HCT116 (cell line): ENCODE measurements at regions of chr1 and their contacts with region 1.

Region 1: DNA sequence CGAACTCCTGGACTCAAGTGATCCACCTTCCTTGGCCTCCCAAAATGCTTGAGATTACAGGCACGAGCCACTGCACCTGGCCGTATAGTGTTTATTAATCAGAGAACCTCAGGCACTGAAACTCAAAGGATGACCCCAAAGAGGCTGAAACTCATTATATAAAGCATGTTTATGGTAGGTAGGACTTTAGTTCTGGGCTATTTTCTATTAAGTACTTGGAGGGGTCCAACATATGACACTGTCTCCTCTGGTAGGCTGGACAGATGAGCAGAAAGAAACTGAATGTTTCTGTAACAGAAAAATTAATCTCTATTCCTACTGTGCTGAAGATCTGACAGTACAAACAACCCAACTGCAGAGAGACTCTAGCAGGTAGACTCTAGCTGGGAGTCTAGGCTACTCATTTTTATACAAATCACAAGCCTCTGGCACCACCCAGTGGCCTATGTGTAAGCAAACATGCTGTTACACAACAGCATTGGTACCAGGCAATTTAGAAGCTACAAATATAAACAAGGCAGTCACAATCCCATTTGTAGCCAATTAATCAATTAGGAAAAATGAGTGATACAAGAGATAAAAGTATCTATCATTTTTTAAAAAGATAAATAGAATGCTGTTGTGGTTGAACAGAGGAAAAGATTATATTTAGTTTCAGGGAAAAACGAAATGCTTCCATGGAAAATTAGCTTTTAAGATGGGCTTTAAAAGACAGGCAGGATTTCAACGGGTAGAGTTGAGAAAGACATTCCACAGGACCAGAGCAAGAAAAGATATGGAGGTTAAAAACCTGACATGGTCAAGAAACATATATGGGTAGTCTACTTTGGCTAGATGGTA is 10.4 kb downstream of the DCAF8 start:
- DNase-seq: peak; percentile 38
- ATAC-seq: peak; percentile 96
- H3K4me3 ChIP-seq: no peak overlapping the region
- H3K27ac ChIP-seq: no peak overlapping the region
- H3K4me1 ChIP-seq: peaks cover 5 to 11% of the 10 kb centered on the region in 2 experiments; a peak in 3 of 4 replicates
- H3K27me3 ChIP-seq: no peaks in the 10 kb centered on the region
- CTCF ChIP-seq: peak; percentile 69 to 83 (median 71); a peak in 5 of 6 replicates
- POLR2A ChIP-seq: no peak
- RAD21 ChIP-seq: peak; percentile 81

Region 2: GRCh38 chr1:160085686-160086455 is 166.0 kb before region 1 on chr1:
- CTCF ChIA-PET with region 1: interaction called, 22 read pairs
- POLR2A ChIA-PET with region 1: no interaction called
- RAD21 ChIA-PET with region 1: interaction called in 1 of 2 experiments, 3 read pairs
- intact Hi-C with region 1: no loop called
- DNase-seq: peak; percentile 44
- ATAC-seq: peak; percentile 79
- H3K4me3 ChIP-seq: no peak overlapping the region
- H3K27ac ChIP-seq: no peak overlapping the region
- H3K4me1 ChIP-seq: no peaks in the 10 kb centered on the region; a peak in 1 of 4 replicates
- H3K27me3 ChIP-seq: peaks cover 9% of the 10 kb centered on the region
- CTCF ChIP-seq: peak; percentile 74 to 92 (median 78)
- POLR2A ChIP-seq: no peak
- RAD21 ChIP-seq: peak; percentile 76

Region 3: DNA sequence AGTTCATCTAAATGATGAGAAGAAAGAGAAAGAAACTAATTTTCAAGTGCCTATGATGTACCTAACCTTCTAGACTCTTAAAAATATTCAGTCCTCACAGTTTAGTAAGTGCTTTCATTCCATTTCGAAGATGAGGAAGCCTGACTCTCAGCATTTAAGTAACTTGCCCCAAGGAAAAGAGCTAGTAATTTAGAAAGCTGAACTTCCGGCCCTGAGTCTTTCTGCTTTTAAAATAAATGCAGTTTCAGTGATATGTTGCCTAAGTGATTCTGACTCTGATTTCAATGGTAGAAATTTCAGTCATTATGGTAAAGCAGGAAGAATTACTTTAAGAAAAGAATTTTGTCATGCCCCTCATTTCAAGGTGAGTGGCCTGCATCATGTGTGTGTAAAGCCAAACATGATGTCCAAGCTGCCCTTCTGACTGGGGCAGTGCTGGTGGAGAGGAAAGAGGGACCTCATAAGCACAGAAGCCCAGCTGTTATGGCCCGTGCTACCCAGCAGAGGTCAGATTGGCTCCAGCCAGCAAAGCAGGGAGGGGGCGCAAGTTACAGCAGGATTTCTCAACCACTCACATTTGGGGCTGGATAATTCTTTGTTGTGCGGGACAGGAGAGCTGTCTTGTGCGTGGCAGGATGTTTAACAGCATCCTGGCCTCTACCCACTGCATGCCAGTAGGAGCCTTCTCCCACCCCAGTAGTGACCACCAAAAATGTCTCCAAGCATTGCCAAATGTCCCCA is 89.8 kb before region 1 on chr1:
- CTCF ChIA-PET with region 1: interaction called, 13 read pairs
- POLR2A ChIA-PET with region 1: no interaction called
- RAD21 ChIA-PET with region 1: no interaction called
- intact Hi-C with region 1: loop called (anchors 1 kb)
- DNase-seq: no peak
- ATAC-seq: peak; percentile 93
- H3K4me3 ChIP-seq: no peak overlapping the region
- H3K27ac ChIP-seq: no peak overlapping the region
- H3K4me1 ChIP-seq: no peaks in the 10 kb centered on the region
- H3K27me3 ChIP-seq: no peaks in the 10 kb centered on the region
- CTCF ChIP-seq: peak; percentile 43 to 61 (median 55); a peak in 5 of 6 replicates
- POLR2A ChIP-seq: no peak
- RAD21 ChIP-seq: peak; percentile 59

Region 4: DNA sequence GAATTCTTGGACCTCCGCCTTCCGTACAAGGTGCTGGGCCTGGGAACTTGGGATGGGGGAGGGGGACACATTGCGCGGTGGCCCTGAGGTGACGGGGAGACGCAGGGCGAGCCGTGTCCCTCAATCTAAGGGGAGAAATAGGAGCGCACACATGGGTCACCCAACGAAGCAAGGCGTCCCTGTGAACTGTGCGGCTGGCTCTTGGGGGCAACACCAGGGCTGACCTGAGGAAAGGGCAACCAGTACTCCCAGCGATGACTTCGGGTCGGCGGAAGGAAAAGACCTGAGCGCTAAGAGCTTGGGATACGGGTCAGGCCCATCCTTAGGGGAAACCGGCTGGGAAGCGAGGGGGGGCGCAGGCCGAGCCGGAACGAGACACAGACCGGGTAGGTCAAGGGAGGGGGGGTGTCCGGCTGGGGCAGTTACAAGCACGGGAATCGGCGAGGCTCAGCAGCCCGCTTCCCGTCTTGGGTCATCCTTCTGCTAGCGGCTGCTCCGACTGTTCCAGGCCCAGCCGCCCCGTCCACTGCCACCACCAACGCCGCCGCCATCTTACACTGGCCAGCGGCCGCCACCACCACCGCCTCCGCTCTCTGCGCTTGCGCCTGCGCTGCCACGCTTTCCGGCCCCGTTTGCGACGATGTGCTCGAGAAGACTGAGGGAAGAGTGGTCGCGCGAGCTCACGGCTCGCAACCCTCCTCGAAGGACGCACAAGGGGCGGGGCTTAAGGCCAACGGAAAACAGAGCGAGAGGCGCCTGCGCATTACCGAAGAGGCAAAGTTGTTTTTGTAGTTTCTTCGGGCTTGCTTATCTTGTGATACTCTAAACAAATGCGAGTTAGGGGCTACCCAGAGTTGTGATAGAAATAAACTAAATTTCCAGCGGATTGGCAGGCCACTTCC is 10.2 kb after region 1 on chr1 and contains the start of gene DCAF8:
- CTCF ChIA-PET with region 1: interaction called, 39 read pairs
- POLR2A ChIA-PET with region 1: interaction called, 5 read pairs
- RAD21 ChIA-PET with region 1: no interaction called
- intact Hi-C with region 1: no loop called
- DNase-seq: peak; percentile 91
- ATAC-seq: peak; percentile 96
- H3K4me3 ChIP-seq: peak within 1 kb of the TSS; percentile 97 to 98
- H3K27ac ChIP-seq: peak within 1 kb of the TSS; percentile 73
- H3K4me1 ChIP-seq: peaks cover 22 to 30% of the 10 kb centered on the region in 2 experiments
- H3K27me3 ChIP-seq: no peaks in the 10 kb centered on the region
- CTCF ChIP-seq: no peak
- POLR2A ChIP-seq: peak; percentile 90
- RAD21 ChIP-seq: no peak
- total RNA-seq, gene DCAF8: 98.1 TPM

Region 5: GRCh38 chr1:160342526-160342925 is 90.6 kb after region 1 on chr1:
- CTCF ChIA-PET with region 1: no interaction called
- POLR2A ChIA-PET with region 1: no interaction called
- RAD21 ChIA-PET with region 1: no interaction called
- intact Hi-C with region 1: no loop called
- DNase-seq: no peak
- ATAC-seq: peak; percentile 19
- H3K4me3 ChIP-seq: peak overlapping the region; percentile 89 to 97
- H3K27ac ChIP-seq: peak overlapping the region; percentile 59
- H3K4me1 ChIP-seq: peaks cover 4 to 12% of the 10 kb centered on the region in 2 experiments; a peak in 3 of 4 replicates
- H3K27me3 ChIP-seq: no peaks in the 10 kb centered on the region
- CTCF ChIP-seq: no peak
- POLR2A ChIP-seq: no peak
- RAD21 ChIP-seq: no peak

Region 6: GRCh38 chr1:160376525-160377131 is 124.7 kb after region 1 on chr1:
- CTCF ChIA-PET with region 1: interaction called, 15 read pairs
- POLR2A ChIA-PET with region 1: no interaction called
- RAD21 ChIA-PET with region 1: interaction called in 1 of 2 experiments, 5 read pairs
- intact Hi-C with region 1: no loop called
- DNase-seq: peak; percentile 61
- ATAC-seq: peak; percentile 92
- H3K4me3 ChIP-seq: no peak overlapping the region
- H3K27ac ChIP-seq: no peak overlapping the region
- H3K4me1 ChIP-seq: peaks cover 0 to 8% of the 10 kb centered on the region in 2 experiments; a peak in 1 of 4 replicates
- H3K27me3 ChIP-seq: no peaks in the 10 kb centered on the region
- CTCF ChIP-seq: peak; percentile 89 to 96 (median 92)
- POLR2A ChIP-seq: no peak
- RAD21 ChIP-seq: peak; percentile 96